GM10248 (cell line): ENCODE measurements at regions of chr3 and their contacts with region 1.

Region 1: DNA sequence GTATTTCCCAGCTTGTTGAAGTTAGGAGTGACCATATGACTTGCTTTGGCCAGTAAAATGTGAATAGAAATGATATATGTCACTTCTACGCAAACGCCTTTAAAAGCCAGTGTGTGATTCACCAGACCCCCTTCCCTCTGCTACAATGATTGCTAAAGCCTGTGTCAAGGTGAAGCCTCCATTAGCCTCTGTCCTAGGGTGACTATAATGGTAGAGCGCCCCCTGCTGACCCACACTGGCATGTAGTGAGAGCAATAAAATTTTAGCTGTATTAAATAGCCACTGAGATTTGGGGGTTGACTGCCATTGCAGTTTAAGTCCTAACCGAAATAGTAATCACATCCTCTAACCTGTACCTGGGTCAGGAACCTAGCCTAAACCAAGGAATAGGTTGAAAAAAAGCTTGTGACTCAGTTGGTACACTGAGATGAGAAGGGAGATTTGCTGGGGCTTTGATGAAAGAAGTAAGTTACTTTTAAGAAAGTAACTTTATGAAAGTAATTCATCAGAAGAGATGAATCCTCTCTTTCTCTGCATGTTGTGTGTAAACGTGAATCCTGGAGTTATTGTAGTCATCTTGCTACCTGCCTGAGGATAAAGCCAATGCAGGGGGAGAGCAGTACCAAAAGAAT is 52.6 kb downstream of the GTF2E1 start:
- DNase-seq: peak; percentile 47
- CTCF ChIP-seq: peak; percentile 90

Region 2: DNA sequence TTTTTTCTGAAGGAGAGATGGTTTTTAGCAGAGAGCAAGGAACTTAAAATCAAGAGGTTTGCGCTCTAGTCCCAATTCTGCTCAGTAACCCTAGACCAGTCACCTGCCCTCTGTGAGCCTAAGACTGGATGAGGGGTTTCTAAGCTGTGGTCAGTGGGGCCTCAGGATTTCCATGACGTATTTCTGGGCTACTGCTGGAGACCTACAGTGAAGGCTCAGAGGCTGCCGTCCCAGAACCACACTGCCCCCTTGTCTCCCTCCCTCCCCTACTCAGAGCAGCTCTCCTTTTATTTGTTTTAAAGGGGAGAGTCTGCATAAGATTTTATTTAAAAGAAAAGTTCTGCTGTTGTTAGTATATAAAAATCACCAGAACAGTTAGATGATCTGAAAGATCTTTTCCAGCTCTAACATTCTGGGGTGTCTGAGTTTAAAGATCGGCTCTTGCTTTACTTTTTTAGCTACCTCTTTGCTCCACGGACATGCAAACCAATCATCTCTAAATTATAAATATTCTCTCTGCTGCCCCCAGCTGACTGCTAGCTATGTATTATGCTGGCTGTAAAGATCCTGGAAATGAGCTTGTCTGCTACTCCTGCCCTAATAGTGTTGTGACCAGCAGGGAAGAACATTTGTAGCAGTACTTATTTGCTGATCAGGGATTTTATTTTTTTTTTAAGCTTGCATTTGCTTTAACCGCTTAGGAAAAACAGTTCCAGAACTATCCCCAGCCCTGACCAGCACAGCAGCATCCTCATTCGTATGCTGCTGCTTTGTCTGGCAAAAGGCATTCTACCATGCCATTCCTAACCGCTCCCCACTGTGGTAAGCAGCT is 227.5 kb before region 1 on chr3:
- CTCF ChIA-PET with region 1: interaction called, 82 read pairs
- POLR2A ChIA-PET with region 1: no interaction called
- DNase-seq: no peak
- CTCF ChIP-seq: peak; percentile 42

Region 3: DNA sequence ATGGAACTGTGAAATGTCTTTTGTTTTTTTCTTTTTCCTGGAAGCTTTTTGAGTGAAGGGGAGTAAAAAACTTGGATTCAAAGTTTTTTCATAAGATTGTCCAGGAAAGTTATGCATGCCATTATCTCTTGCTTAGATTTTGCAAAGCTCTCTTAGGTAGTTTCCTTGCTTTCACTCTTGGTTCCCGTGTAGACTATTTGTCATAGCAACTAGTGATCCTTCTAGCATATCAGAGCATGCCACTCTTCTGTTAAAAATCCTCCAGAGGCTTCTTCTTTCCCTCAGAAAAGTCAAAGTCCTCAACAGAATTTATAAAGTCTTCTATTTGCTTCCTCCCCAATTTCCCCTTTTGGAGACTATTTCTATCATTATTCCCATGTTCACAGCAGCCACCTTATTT is 31.5 kb before region 1 on chr3:
- CTCF ChIA-PET with region 1: interaction called, 15 read pairs
- POLR2A ChIA-PET with region 1: no interaction called
- DNase-seq: peak; percentile 22
- CTCF ChIP-seq: no peak

Region 4: DNA sequence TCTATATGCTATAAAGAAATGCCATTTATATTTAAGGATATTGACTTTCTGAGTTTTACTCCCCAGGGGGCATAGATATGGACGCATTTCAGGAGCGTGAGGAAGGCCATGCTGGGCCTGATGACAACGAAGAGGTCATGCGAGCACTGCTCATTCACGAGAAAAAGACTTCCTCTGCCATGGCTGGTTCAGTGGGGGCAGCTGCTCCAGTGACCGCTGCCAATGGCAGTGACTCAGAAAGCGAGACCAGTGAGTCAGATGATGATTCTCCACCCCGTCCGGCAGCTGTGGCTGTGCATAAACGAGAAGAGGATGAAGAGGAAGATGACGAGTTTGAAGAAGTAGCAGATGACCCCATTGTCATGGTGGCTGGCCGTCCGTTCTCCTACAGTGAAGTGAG is 14.2 kb before region 1 on chr3:
- CTCF ChIA-PET with region 1: interaction called, 52 read pairs
- POLR2A ChIA-PET with region 1: no interaction called
- DNase-seq: peak; percentile 40
- CTCF ChIP-seq: no peak